ENCODE measurements at regions of chr16 and their contacts with region 1.

Region 1: DNA sequence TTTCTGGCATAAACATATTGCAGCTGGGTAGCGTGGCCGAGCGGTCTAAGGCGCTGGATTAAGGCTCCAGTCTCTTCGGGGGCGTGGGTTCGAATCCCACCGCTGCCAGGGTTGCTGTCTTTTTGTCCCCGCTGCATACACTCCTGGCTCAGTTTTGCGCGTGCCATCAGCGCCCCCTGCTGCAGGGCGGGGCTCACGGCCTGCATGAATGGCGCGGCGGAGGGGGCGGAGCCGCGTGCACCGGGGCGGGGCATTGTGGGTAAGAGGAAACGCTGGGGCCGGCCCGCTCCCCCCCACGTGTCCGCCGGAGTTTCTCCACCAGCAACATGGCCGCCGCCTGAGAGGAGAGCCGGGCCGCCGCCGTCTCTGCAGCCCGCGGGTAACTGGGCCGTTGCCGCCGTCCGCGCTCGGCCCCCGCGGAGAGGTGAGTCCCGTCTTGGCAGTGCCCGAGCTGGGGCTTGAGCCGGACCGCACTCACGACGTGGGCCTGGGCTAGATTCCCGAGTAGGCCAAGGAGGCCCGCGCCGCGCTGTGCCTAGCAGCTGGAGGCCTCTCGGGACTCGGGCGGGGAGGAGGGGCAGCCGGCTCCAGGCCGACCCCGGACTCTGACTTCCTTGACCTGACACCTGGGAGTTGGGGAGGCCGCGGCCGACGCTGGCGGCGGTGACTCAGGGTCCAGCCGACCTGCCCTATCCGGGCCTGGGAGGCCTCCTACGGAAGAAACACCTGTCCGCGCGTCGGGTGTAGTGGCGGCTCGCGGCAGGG is at the start of gene POLR3E:
- DNase-seq: peak; percentile 99
- H3K4me3 ChIP-seq: peak within 1 kb of the TSS; percentile 77 to 99 (median 99)
- H3K27ac ChIP-seq: peak within 1 kb of the TSS; percentile 81
- H3K4me1 ChIP-seq: no peaks in the 10 kb centered on the region
- H3K27me3 ChIP-seq: no peaks in the 10 kb centered on the region
- CTCF ChIP-seq: peak; percentile 93
- POLR2A ChIP-seq: peak; percentile 66
- total RNA-seq, gene POLR3E: 42.8 and 48.3 TPM in 2 replicates

Region 2: GRCh38 chr16:21952793-21953540 is 344.3 kb before region 1 on chr16 and contains the start of gene UQCRC2:
- CTCF ChIA-PET with region 1: interaction called, 4 read pairs
- POLR2A ChIA-PET with region 1: no interaction called
- dilution Hi-C with region 1: no loop called
- intact Hi-C with region 1: loop called (anchors 1 kb)
- DNase-seq: peak; percentile 94
- H3K4me3 ChIP-seq: peak within 1 kb of the TSS; percentile 53 to 92 (median 83)
- H3K27ac ChIP-seq: peak within 1 kb of the TSS; percentile 97
- H3K4me1 ChIP-seq: peaks cover 16% of the 10 kb centered on the region
- H3K27me3 ChIP-seq: no peaks in the 10 kb centered on the region
- CTCF ChIP-seq: no peak
- POLR2A ChIP-seq: peak; percentile 87
- total RNA-seq, gene UQCRC2: 189 and 207 TPM in 2 replicates

Region 3: DNA sequence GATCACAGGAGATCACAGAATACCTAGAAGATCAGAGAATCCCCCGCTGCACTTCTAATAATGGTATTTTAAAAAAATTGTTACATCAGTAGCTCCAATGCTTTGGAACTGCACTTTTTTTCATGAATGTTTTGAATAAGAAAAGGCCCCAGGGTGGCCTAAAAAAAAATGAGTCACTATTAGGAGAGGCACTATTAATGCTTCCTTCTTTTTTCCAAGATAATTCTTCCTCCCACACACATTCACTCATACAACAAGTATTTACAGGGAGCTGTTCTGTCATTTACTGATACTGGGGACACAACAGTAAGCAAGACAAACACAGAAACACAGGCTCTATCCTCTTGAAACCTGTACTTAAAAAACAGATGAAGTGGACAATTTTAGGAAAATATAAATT is 295.7 kb before region 1 on chr16:
- CTCF ChIA-PET with region 1: no interaction called
- POLR2A ChIA-PET with region 1: no interaction called
- dilution Hi-C with region 1: no loop called
- intact Hi-C with region 1: loop called (anchors 2 kb)
- DNase-seq: no peak
- H3K4me3 ChIP-seq: no peak overlapping the region
- H3K27ac ChIP-seq: no peak overlapping the region
- H3K4me1 ChIP-seq: peaks cover 19% of the 10 kb centered on the region
- H3K27me3 ChIP-seq: no peaks in the 10 kb centered on the region
- CTCF ChIP-seq: no peak
- POLR2A ChIP-seq: no peak

Region 4: GRCh38 chr16:22206013-22206841 is 91.1 kb before region 1 on chr16 and contains the start of gene EEF2K:
- CTCF ChIA-PET with region 1: interaction called, 4 read pairs
- POLR2A ChIA-PET with region 1: no interaction called
- dilution Hi-C with region 1: no loop called
- intact Hi-C with region 1: loop called (anchors 1 kb)
- DNase-seq: peak; percentile 95
- H3K4me3 ChIP-seq: peak within 1 kb of the TSS; percentile 70 to 88 (median 79)
- H3K27ac ChIP-seq: peak within 1 kb of the TSS; percentile 85
- H3K4me1 ChIP-seq: peaks cover 16% of the 10 kb centered on the region
- H3K27me3 ChIP-seq: no peaks in the 10 kb centered on the region
- CTCF ChIP-seq: peak; percentile 66 to 81
- POLR2A ChIP-seq: peak; percentile 68
- total RNA-seq, gene EEF2K: 44.1 and 48.6 TPM in 2 replicates

Region 5: GRCh38 chr16:22262460-22262859 is 34.8 kb before region 1 on chr16:
- CTCF ChIA-PET with region 1: interaction called, 4 read pairs
- POLR2A ChIA-PET with region 1: no interaction called
- dilution Hi-C with region 1: no loop called
- intact Hi-C with region 1: loop called (anchors 2 kb)
- DNase-seq: peak; percentile 30
- H3K4me3 ChIP-seq: no peak overlapping the region
- H3K27ac ChIP-seq: no peak overlapping the region
- H3K4me1 ChIP-seq: peaks cover 7% of the 10 kb centered on the region
- H3K27me3 ChIP-seq: no peaks in the 10 kb centered on the region
- CTCF ChIP-seq: no peak
- POLR2A ChIP-seq: no peak

Region 6: DNA sequence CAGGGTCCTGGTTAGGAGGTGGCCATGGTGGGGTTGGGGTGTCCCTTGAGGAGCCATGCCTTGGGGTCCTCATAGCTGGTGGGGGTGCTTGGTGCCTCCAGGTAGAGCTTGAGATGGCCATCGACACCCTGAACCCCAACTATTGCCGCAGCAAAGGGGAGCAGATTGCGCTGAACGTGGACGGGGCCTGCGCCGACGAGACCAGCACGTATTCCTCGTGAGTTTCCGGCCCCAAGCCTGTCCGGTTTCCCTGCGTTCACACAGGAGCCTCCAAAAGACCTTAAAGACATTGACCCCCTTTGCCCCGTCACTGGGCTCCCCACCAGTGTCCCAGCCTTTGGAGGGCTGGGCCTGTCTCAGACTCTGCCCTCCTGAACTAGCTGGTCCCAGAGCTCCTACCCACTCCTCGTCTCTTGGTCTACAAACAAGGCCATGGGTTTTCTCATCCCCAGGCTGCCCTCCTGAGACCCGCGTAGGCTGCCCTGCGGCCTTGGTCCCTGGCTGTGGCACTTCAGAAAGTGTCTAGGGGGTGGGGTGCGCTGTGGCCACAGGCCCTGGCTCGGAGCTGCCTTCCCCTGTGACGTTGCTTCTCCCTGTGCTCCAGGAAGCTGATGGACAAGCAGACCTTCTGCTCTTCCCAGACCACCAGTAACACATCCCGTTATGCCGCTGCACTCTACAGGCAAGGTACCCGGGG is 11.7 kb after region 1 on chr16:
- CTCF ChIA-PET with region 1: interaction called, 10 read pairs
- POLR2A ChIA-PET with region 1: no interaction called
- dilution Hi-C with region 1: no loop called
- intact Hi-C with region 1: no loop called
- DNase-seq: no peak
- H3K4me3 ChIP-seq: no peak overlapping the region
- H3K27ac ChIP-seq: no peak overlapping the region
- H3K4me1 ChIP-seq: no peaks in the 10 kb centered on the region
- H3K27me3 ChIP-seq: no peaks in the 10 kb centered on the region
- CTCF ChIP-seq: no peak
- POLR2A ChIP-seq: no peak